PC-3 (cell line): ENCODE measurements at regions of chr1 and their contacts with region 1.

Region 1: GRCh38 chr1:79150576-79150975 is 144.0 kb upstream of the ADGRL4 start:
- DNase-seq: no peak
- ATAC-seq: no peak
- H3K4me3 ChIP-seq: no peak overlapping the region
- H3K27ac ChIP-seq: no peak overlapping the region
- H3K4me1 ChIP-seq: peaks cover 18% of the 10 kb centered on the region
- H3K27me3 ChIP-seq: no peaks in the 10 kb centered on the region
- CTCF ChIP-seq: no peak

Region 2: DNA sequence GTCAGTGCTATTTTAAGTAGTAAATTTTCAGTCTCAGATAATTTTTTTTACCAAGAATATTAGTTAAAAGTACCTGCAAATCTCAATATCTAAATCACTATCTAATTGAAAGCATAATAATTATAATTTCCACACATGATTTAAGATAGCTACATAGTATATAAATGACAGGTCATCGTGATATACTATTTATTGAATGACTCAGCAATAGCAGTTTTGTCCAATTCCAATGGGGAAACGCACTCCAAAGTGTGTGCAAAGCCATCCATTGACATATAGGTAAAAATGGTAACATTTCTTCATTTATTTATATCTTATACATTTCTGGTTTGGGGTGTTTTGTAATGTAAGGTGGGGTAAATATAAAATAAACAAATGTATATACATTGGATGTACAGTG is 163.5 kb before region 1 on chr1:
- CTCF ChIA-PET with region 1: no interaction called
- POLR2A ChIA-PET with region 1: no interaction called
- intact Hi-C with region 1: no loop called
- DNase-seq: peak; percentile 25
- ATAC-seq: 0 out of 2 replicates have a peak, but pooled peaks have one; percentile 33
- H3K4me3 ChIP-seq: no peak overlapping the region
- H3K27ac ChIP-seq: no peak overlapping the region
- H3K4me1 ChIP-seq: no peaks in the 10 kb centered on the region
- H3K27me3 ChIP-seq: no peaks in the 10 kb centered on the region
- CTCF ChIP-seq: no peak

Region 3: DNA sequence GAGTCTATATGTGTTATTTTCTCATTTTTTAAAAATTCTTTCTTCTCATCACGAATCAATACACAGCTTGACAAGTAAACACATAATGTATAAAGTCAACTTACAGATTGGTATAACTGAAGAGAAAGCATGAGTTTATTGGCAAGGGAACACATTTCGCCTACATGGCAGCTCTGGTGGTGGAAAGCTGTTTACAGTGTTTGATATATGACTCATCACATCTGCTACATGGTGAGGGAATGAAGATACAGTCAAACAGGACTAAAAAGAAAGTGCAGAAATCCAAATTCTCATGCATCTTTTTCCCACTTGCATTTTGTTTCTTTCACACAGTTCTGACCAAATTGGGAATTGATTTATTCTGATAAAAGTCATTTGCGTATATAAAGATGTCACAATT is 21.9 kb before region 1 on chr1:
- CTCF ChIA-PET with region 1: no interaction called
- POLR2A ChIA-PET with region 1: no interaction called
- intact Hi-C with region 1: loop called (anchors 2 kb)
- DNase-seq: peak; percentile 83
- ATAC-seq: peak; percentile 99
- H3K4me3 ChIP-seq: no peak overlapping the region
- H3K27ac ChIP-seq: peak overlapping the region; percentile 58
- H3K4me1 ChIP-seq: peaks cover 16% of the 10 kb centered on the region
- H3K27me3 ChIP-seq: no peaks in the 10 kb centered on the region
- CTCF ChIP-seq: no peak